ENCODE measurements at regions of chrX and their contacts with region 1.

Region 1: DNA sequence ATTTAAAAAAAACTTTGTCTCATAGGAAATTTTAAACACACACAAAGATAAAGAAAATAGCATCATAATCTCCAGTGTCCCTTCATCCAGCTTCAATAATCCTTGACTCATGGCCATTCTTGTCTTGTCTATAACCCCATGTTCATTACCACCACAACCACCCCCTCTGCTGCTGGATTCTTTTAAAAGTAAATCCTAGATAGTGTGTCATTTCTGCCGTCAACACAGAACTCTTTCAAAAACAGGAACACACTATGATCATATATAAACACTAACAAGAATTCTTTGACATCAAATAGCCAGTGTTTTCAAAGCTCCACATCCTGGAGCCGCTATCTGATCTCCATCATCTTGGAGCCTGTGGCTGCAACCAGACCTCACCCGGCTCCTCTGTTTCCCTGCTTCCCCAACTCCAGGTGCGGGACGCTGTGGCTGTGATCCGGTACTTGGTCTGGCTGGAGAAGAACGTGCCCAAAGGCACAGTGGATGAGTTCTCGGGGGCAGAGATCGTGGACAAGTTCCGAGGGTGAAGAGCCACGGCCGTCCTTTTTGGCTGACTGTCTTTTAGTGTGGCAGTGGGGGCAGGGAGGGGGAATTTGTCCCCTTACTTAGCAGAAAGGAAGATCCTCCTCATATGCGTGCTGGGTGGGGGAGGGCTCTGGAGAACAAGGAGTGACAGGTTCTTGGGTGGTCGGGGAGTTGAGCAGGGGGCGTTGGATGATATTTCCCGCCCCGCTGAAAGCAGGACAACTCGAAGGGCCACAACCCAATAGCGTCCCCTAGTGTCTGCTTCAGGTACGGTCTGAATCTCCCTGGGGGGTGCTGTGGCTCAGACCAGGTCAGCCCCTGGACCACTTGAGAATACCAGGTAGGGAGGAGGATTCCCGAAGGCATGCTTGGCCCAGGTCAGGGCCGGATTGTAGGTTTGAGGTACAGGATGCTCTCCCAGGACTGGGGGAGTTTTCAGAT is 15.6 kb downstream of the XPNPEP2 start:
- DNase-seq: no peak
- ATAC-seq: no peak
- H3K4me3 ChIP-seq: no peak overlapping the region
- H3K4me3 Mint-ChIP-seq: peak overlapping the region; percentile 10
- H3K27ac ChIP-seq: no peak overlapping the region
- H3K27ac Mint-ChIP-seq: peak overlapping the region; percentile 73
- H3K4me1 ChIP-seq: peaks cover 37 to 52% of the 10 kb centered on the region in 2 donors
- H3K4me1 Mint-ChIP-seq: peaks cover 46% of the 10 kb centered on the region
- H3K27me3 ChIP-seq: no peaks in the 10 kb centered on the region
- H3K27me3 Mint-ChIP-seq: no peaks in the 10 kb centered on the region
- CTCF ChIP-seq: peak; percentile 24

Region 2: GRCh38 chrX:129452523-129452922 is 301.8 kb before region 1 on chrX:
- CTCF ChIA-PET with region 1: no interaction called
- POLR2A ChIA-PET with region 1: no interaction called
- intact Hi-C with region 1: no loop called
- DNase-seq: no peak
- ATAC-seq: no peak
- H3K4me3 ChIP-seq: no peak overlapping the region
- H3K4me3 Mint-ChIP-seq: no peak overlapping the region
- H3K27ac ChIP-seq: no peak overlapping the region
- H3K27ac Mint-ChIP-seq: no peak overlapping the region
- H3K4me1 ChIP-seq: no peaks in the 10 kb centered on the region
- H3K4me1 Mint-ChIP-seq: no peaks in the 10 kb centered on the region
- H3K27me3 ChIP-seq: no peaks in the 10 kb centered on the region
- H3K27me3 Mint-ChIP-seq: no peaks in the 10 kb centered on the region
- CTCF ChIP-seq: no peak

Region 3: GRCh38 chrX:129772796-129773431 is 18.6 kb after region 1 on chrX:
- CTCF ChIA-PET with region 1: interaction called, 11 read pairs
- POLR2A ChIA-PET with region 1: interaction called, 9 read pairs
- intact Hi-C with region 1: loop called (anchors 2 kb)
- DNase-seq: peak; percentile 91
- ATAC-seq: peak; percentile 71
- H3K4me3 ChIP-seq: no peak overlapping the region
- H3K4me3 Mint-ChIP-seq: peak overlapping the region; percentile 75
- H3K27ac ChIP-seq: peak overlapping the region; percentile 88 to 90
- H3K27ac Mint-ChIP-seq: peak overlapping the region; percentile 97
- H3K4me1 ChIP-seq: peaks cover 87 to 98% of the 10 kb centered on the region in 2 donors
- H3K4me1 Mint-ChIP-seq: peaks cover 72% of the 10 kb centered on the region
- H3K27me3 ChIP-seq: no peaks in the 10 kb centered on the region
- H3K27me3 Mint-ChIP-seq: no peaks in the 10 kb centered on the region
- CTCF ChIP-seq: no peak

Region 4: DNA sequence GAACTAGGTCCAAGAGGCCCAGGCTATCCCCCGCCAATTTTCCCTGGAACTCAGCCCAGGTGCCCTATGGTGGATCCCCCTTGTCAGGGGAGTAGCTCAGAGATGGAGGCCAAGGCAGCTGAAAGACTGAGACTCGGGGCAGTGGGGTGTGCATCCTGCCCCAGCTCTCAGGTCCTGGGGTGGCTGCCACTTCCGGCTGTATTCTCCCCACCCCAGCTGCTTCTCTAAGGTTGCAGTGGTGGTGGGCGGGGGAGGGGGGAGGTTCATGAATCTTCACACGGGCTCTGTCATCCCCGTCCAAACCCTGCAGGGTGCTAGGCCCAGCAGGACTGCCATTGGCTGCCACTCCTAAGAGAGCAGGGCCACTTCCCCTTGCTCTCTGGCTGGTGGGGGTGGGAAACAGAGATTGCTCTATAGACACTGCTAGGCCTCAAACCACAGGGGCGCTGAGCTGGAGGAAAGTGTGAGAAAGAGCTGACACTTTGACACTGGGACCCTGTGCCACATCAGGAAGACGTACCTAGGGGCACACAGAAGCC is 26.9 kb after region 1 on chrX:
- CTCF ChIA-PET with region 1: interaction called, 24 read pairs
- POLR2A ChIA-PET with region 1: interaction called, 31 read pairs
- intact Hi-C with region 1: loop called (anchors 2 kb)
- DNase-seq: peak; percentile 86
- ATAC-seq: peak; percentile 68
- H3K4me3 ChIP-seq: peak overlapping the region; percentile 65 to 83 (median 78)
- H3K4me3 Mint-ChIP-seq: peak overlapping the region; percentile 89
- H3K27ac ChIP-seq: peak overlapping the region; percentile 97 to 99
- H3K27ac Mint-ChIP-seq: peak overlapping the region; percentile 97
- H3K4me1 ChIP-seq: peaks cover 76 to 81% of the 10 kb centered on the region in 2 donors
- H3K4me1 Mint-ChIP-seq: peaks cover 66% of the 10 kb centered on the region
- H3K27me3 ChIP-seq: no peaks in the 10 kb centered on the region
- H3K27me3 Mint-ChIP-seq: no peaks in the 10 kb centered on the region
- CTCF ChIP-seq: no peak

Region 5: GRCh38 chrX:129786210-129786651 is 31.9 kb after region 1 on chrX:
- CTCF ChIA-PET with region 1: interaction called, 24 read pairs
- POLR2A ChIA-PET with region 1: interaction called, 31 read pairs
- intact Hi-C with region 1: loop called (anchors 2 kb)
- DNase-seq: peak; percentile 78
- ATAC-seq: peak; percentile 73
- H3K4me3 ChIP-seq: peak overlapping the region in 4 of 5 experiments; percentile 8 to 46 (median 24)
- H3K4me3 Mint-ChIP-seq: peak overlapping the region; percentile 85
- H3K27ac ChIP-seq: peak overlapping the region; percentile 24 to 66
- H3K27ac Mint-ChIP-seq: peak overlapping the region; percentile 95
- H3K4me1 ChIP-seq: peaks cover 60 to 67% of the 10 kb centered on the region in 2 donors
- H3K4me1 Mint-ChIP-seq: peaks cover 59% of the 10 kb centered on the region
- H3K27me3 ChIP-seq: no peaks in the 10 kb centered on the region
- H3K27me3 Mint-ChIP-seq: no peaks in the 10 kb centered on the region
- CTCF ChIP-seq: no peak

Measured in B cell (primary cell).